ENCODE measurements at regions of chr7 and their contacts with region 1.

Region 1: DNA sequence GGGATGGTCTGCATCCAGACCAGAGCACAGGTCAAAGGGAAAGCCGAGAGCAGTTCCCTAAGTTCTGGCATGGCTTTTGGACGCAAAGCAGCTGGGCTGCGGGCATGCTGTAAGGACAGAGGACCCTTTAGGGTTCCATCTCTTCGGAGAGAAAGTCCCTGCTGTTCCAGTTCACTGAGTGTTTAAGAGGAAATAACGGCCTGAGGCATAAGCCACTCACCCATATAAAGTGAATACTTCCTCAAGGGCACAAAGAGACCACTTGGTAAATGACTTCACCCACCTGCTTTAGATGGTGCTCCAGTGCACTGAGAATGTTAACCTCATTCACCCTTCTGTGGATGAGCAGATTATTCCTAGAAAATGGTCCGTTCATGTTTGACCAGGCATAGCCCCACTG is 586.7 kb upstream of the GALNT17 start:
- DNase-seq: no peak
- H3K4me3 ChIP-seq: no peak overlapping the region
- H3K27ac ChIP-seq: no peak overlapping the region
- H3K4me1 ChIP-seq: peaks cover 0 to 14% (median 0%) of the 10 kb centered on the region in 4 donors
- H3K27me3 ChIP-seq: no peaks in the 10 kb centered on the region
- CTCF ChIP-seq: no peak

Region 2: DNA sequence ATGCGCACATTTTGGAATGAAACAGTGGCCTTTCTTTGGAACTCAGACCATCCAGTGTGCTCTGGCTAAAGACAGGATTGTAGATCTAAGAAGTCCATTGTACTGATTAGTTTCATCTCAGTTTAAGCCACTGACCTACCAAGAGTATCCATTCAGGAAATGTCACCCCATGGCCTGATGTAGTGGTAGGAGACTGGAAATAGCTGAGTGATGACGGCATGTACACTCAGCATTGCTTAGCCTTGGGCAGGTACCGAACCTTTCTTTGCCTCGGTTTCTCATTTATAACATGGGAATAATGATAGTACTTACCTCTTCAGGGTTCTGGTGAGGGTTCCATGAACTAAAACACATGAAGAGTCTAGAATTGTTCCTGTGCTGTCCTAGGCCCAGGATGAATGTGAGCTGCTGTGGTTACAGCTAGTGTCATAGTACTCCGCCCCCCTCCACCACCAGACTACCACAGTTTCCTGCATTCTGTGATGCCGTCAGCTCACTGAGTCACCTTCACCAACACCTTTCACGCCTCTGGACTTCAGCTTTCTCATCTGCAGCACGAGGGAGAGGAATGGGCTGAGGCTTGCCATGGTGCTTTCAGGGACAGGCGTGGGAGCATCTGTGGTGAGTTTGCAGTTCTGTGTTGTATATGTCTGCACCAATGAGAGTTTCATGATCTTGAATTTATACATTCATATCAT is 102.7 kb after region 1 on chr7:
- intact Hi-C with region 1: loop called (anchors 1 kb)
- DNase-seq: no peak
- H3K4me3 ChIP-seq: no peak overlapping the region
- H3K27ac ChIP-seq: no peak overlapping the region
- H3K4me1 ChIP-seq: no peaks in the 10 kb centered on the region
- H3K27me3 ChIP-seq: no peaks in the 10 kb centered on the region
- CTCF ChIP-seq: no peak

Measured in tibial artery (tissue), 4 donors.